Endothelial cell of umbilical vein (primary cell): ENCODE measurements at regions of chrX and their contacts with region 1.

Region 1: GRCh38 chrX:38220024-38220414 is 652 bp downstream of the SRPX start:
- DNase-seq: peak; percentile 58
- H3K4me3 ChIP-seq: peak overlapping the region; percentile 28 to 63 (median 57)
- H3K27ac ChIP-seq: peak overlapping the region; percentile 5
- H3K4me1 ChIP-seq: peaks cover 18% of the 10 kb centered on the region
- H3K27me3 ChIP-seq: no peaks in the 10 kb centered on the region
- CTCF ChIP-seq: peak; percentile 14 to 47
- POLR2A ChIP-seq: no peak

Region 2: DNA sequence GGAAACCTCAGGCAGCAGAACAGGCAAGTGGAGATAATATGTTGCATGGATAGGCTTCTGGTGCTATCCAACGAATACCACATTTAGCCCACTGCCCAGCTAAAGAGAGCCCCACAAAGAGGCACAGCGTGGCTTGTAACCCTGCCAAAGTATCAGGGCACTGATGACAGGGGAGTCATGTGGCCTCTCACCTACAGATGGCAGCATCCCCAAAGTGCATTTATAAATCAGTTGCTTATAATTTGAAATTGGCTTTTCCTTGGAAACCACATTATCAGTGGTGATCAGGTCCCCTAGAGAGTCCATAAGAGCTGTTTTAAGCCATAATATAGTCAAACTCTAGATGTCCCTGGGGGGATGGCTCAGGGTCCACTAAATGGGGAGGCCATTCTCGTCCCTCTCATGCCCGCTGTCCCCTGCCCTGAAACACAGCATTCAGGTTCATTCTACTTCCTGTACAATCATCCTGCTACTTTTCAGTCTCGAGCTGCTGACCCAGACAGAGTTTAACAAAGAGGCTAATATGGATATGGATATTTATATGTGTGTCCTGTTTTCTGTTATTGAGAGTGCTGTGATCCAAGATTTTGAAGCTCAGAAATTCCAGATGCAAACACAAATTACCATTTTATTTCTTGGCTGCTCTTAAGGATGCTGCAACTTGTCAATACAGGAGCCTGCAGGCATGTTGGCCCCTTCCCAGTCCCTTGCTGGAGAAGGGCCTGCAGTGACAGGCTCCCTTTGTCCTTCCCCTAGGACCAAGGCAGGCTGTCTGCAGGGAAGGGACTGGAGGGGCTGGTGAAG is 27.8 kb before region 1 on chrX:
- CTCF ChIA-PET with region 1: interaction called, 15 read pairs
- POLR2A ChIA-PET with region 1: no interaction called
- dilution Hi-C with region 1: no loop called
- intact Hi-C with region 1: no loop called
- DNase-seq: peak; percentile 29
- H3K4me3 ChIP-seq: no peak overlapping the region
- H3K27ac ChIP-seq: no peak overlapping the region
- H3K4me1 ChIP-seq: no peaks in the 10 kb centered on the region
- H3K27me3 ChIP-seq: no peaks in the 10 kb centered on the region
- CTCF ChIP-seq: peak; percentile 30 to 36
- POLR2A ChIP-seq: no peak

Region 3: DNA sequence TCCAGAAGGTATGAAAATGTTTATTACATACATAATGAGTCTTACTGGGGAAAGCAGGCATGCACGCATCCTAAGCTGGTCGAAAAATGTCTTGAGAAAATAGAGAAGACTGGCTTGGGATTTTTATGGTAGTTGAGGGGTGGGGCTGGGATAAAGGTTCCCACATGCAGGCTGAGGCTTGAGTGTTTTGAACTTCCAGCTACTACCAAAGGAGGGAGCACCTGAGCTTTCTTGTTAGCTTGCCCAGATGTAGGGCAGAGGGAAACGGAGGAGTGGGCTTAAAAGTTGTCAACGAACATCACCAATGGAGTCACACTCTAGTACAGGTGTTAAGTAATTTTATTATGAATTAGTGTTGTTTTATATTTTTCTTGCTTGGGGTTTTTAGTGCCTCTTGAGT is 40.2 kb after region 1 on chrX:
- CTCF ChIA-PET with region 1: interaction called, 6 read pairs
- POLR2A ChIA-PET with region 1: no interaction called
- dilution Hi-C with region 1: no loop called
- intact Hi-C with region 1: loop called (anchors 5 kb)
- DNase-seq: peak; percentile 35
- H3K4me3 ChIP-seq: no peak overlapping the region
- H3K27ac ChIP-seq: no peak overlapping the region
- H3K4me1 ChIP-seq: no peaks in the 10 kb centered on the region
- H3K27me3 ChIP-seq: no peaks in the 10 kb centered on the region
- CTCF ChIP-seq: peak; percentile 15 to 31
- POLR2A ChIP-seq: no peak